ENCODE measurements at regions of chr6 and their contacts with region 1.

Region 1: DNA sequence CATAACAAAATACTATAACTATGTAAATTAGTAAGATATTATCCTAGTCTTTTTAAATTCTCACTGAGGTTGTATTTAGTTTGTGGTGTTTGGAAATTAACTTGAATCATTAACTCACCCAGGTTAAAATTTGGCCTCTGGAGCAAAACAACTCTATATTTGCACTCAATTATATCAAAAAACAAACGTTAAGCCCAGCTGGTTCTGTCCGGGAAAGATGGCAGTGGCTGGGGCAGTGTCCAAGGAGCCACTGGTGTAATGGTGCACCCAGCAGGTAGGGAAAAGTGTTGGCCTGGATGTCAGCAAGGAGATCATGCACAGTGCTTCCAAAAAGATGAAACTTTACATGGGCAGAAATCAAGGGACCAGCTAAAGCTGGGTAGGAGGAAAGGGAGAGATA is 285.3 kb upstream of the CITED2 start:
- DNase-seq: no peak
- H3K4me3 ChIP-seq: no peak overlapping the region
- H3K27ac ChIP-seq: no peak overlapping the region
- H3K27me3 ChIP-seq: no peaks in the 10 kb centered on the region
- CTCF ChIP-seq: no peak

Region 2: DNA sequence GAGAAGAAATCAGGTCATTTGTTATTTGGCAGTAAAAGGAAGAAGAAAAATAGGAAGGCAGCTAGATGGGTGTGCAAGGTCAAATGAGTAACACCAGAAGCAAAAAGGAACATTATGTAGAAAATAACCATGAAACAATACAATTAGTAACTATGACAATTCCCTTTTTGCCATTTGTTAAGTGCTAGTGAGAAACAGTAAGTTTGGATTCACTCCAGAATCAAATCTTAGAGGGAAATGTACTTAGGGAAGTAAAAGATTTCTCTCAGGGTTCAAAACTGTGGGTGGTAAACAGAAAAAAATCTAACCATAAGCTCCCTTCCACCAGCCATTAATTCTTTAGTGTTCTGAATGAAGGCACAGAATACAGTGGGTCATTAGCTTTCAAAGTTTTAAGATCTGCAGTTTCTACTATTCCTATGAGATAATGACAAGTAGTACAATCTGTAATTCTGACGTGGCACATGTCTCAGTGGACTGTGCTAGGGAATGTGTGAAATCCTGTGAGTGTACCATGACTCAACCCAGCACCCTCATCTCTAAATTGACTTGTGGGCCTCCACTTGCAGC is 688.8 kb before region 1 on chr6:
- intact Hi-C with region 1: no loop called
- DNase-seq: peak in 2 of 10 donors; percentile 45 to 58
- H3K4me3 ChIP-seq: peak overlapping the region in 19 of 59 donors; percentile 4 to 45 (median 25)
- H3K27ac ChIP-seq: peak overlapping the region in 56 of 59 donors; percentile 10 to 88 (median 76)
- H3K27me3 ChIP-seq: no peaks in the 10 kb centered on the region
- CTCF ChIP-seq: no peak

Region 3: GRCh38 chr6:140185991-140186390 is 526.3 kb after region 1 on chr6:
- intact Hi-C with region 1: loop called in 1 of 2 experiments (anchors 5 kb)
- DNase-seq: no peak
- H3K4me3 ChIP-seq: no peak overlapping the region
- H3K27ac ChIP-seq: no peak overlapping the region
- H3K27me3 ChIP-seq: no peaks in the 10 kb centered on the region
- CTCF ChIP-seq: no peak